ENCODE measurements at regions of chr21 and their contacts with region 1.

Region 1: DNA sequence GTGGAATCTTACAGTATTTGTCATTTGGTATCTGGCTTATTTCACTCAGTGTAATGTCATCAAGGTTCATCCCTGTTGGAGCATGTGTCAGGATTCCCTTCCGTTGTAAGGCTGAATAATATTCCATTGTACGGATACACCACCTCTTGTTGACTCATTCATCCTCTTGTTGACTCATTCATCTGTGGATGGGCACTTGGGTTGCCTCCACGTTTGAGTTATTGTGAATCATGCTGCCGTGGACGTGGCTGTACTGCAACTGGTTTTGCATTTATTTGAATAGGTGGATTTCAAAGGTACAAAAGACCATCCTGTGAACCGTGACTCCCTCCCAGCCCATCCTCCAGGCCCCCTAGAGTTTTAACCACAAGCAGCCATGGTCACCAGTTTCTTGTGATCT is 11.9 kb upstream of the TCP10L start:
- DNase-seq: peak; percentile 98
- ATAC-seq: peak; percentile 95
- H3K4me3 ChIP-seq: no peak overlapping the region
- H3K27ac ChIP-seq: peak overlapping the region; percentile 80
- H3K4me1 ChIP-seq: peaks cover 12% of the 10 kb centered on the region
- H3K27me3 ChIP-seq: no peaks in the 10 kb centered on the region
- CTCF ChIP-seq: no peak

Region 2: DNA sequence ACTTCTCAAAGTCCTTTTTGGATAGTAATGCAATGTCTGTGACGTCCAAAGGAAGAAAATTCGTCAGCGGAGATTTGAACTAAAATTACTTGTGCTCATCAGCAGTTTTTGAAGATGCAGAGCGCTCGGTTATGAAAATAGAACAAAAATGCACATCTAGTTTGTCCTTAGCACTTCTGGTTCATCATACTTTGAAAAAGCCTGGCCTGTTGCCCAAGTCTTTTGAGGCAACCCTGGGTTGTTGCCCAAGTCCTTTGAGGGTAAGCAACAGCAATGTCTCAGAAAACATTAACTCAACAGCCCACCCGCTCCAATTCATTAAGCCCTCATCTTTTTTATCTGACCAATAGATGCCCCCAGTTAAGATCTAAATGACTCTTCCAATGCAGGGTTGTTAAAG is 632.5 kb before region 1 on chr21:
- CTCF ChIA-PET with region 1: no interaction called
- POLR2A ChIA-PET with region 1: no interaction called
- intact Hi-C with region 1: no loop called
- DNase-seq: no peak
- ATAC-seq: no peak
- H3K4me3 ChIP-seq: no peak overlapping the region
- H3K27ac ChIP-seq: no peak overlapping the region
- H3K4me1 ChIP-seq: no peaks in the 10 kb centered on the region
- H3K27me3 ChIP-seq: peaks cover 81% of the 10 kb centered on the region
- CTCF ChIP-seq: no peak

Region 3: DNA sequence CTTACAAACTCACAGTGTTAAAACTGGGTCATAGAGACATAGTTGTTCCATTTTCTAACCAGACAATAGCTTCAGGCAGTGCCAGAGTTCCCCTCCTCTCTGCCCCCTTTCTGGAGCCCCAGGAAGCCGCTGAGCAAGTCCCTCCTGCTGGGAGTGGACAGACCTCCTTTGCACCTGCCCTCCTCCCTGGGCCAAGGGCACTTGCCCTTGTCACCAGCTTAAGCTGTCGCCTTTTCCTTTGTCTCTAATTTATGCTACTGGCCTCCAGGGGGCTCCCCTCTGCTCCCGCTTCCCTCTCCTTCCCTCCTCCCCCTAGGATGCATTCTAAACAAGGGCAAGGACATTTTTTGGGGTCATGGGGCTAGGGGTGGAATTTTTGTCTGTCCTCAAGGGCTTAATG is 500.8 kb before region 1 on chr21:
- CTCF ChIA-PET with region 1: no interaction called
- POLR2A ChIA-PET with region 1: no interaction called
- intact Hi-C with region 1: no loop called
- DNase-seq: peak; percentile 15
- ATAC-seq: peak; percentile 40; the same call in 1 of the 2 replicates
- H3K4me3 ChIP-seq: no peak overlapping the region
- H3K27ac ChIP-seq: no peak overlapping the region
- H3K4me1 ChIP-seq: no peaks in the 10 kb centered on the region
- H3K27me3 ChIP-seq: peaks cover 21% of the 10 kb centered on the region
- CTCF ChIP-seq: peak; percentile 60

Region 4: DNA sequence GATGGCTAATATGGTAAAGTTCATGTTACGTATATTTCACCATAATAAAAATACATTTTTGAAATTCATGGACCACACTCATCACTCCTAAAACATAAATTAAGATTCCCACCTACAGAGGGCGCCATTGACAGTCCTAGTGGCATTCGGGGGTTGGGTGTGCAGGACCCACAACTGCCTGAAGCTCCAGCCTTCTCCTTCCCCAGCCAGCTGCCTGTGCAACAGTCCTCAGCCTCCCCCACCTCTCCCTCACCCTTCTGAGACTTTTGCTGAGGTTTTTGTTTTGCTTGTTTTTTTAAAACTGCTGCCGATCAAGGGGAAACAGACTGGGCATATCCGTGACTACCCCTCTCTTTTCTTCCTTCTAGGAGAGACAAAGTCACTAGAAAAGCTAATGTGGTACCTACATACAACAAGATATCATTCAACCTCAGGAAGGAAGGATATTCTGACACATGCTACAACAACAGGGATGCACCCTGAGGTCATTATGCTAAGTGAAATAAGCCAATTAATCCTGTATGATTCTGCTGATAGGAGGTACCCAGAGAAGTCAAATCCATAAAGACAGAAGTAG is 193.9 kb before region 1 on chr21:
- CTCF ChIA-PET with region 1: interaction called, 18 read pairs
- POLR2A ChIA-PET with region 1: no interaction called
- intact Hi-C with region 1: loop called (anchors 1 kb)
- DNase-seq: peak; percentile 88
- ATAC-seq: peak; percentile 93
- H3K4me3 ChIP-seq: no peak overlapping the region
- H3K27ac ChIP-seq: no peak overlapping the region
- H3K4me1 ChIP-seq: no peaks in the 10 kb centered on the region
- H3K27me3 ChIP-seq: no peaks in the 10 kb centered on the region
- CTCF ChIP-seq: peak; percentile 90

Region 5: DNA sequence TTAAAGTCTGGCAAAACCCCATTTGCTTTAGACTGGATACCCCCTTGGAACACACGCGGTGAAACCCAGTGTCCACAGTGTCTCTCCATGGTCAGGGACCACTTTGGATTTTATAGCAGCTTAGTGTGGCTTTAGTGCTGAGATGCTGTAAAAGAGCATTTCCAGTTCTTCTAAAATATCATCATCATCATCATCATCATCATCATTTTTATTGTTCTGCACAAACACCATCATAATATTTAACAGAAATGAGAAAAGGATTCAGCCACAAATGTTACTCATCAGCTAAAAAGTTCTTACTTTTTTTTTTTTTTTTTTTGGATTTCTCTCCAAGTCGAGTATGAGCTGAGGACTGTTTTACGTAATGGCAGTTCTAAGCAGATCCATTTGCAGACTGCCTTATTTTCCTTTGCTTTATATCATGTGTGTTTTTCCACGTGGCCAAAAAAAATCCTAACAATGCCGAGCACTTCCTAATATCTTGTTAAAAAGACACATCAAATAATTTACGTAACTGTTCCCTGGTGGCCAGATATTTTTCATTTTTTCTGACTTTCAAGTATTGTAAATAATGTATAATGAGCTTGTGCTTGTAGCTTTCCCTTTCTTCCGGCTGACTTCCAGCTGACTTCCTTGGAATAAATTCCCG is 121.9 kb before region 1 on chr21:
- CTCF ChIA-PET with region 1: no interaction called
- POLR2A ChIA-PET with region 1: interaction called, 9 read pairs
- intact Hi-C with region 1: loop called (anchors 1 kb)
- DNase-seq: peak; percentile 52
- ATAC-seq: peak; percentile 52
- H3K4me3 ChIP-seq: peak overlapping the region; percentile 25; the same call in 1 of the 2 replicates
- H3K27ac ChIP-seq: peak overlapping the region; percentile 41
- H3K4me1 ChIP-seq: peaks cover 38% of the 10 kb centered on the region
- H3K27me3 ChIP-seq: no peaks in the 10 kb centered on the region
- CTCF ChIP-seq: no peak

Region 6: GRCh38 chr21:32516756-32517649 is 80.2 kb before region 1 on chr21:
- CTCF ChIA-PET with region 1: no interaction called
- POLR2A ChIA-PET with region 1: no interaction called
- intact Hi-C with region 1: loop called (anchors 1 kb)
- DNase-seq: peak; percentile 82
- ATAC-seq: peak; percentile 95
- H3K4me3 ChIP-seq: no peak overlapping the region
- H3K27ac ChIP-seq: peak overlapping the region; percentile 93
- H3K4me1 ChIP-seq: peaks cover 20% of the 10 kb centered on the region
- H3K27me3 ChIP-seq: no peaks in the 10 kb centered on the region
- CTCF ChIP-seq: no peak

Region 7: GRCh38 chr21:33089398-33090119 is 492.4 kb after region 1 on chr21:
- CTCF ChIA-PET with region 1: no interaction called
- POLR2A ChIA-PET with region 1: interaction called, 11 read pairs
- intact Hi-C with region 1: no loop called
- DNase-seq: peak; percentile 12
- ATAC-seq: no peak
- H3K4me3 ChIP-seq: no peak overlapping the region
- H3K27ac ChIP-seq: no peak overlapping the region
- H3K4me1 ChIP-seq: no peaks in the 10 kb centered on the region
- H3K27me3 ChIP-seq: peaks cover 59% of the 10 kb centered on the region
- CTCF ChIP-seq: no peak

Measured in PC-3 (cell line).